HCT116 (cell line): ENCODE measurements at regions of chr11 and their contacts with region 1.

Region 1: DNA sequence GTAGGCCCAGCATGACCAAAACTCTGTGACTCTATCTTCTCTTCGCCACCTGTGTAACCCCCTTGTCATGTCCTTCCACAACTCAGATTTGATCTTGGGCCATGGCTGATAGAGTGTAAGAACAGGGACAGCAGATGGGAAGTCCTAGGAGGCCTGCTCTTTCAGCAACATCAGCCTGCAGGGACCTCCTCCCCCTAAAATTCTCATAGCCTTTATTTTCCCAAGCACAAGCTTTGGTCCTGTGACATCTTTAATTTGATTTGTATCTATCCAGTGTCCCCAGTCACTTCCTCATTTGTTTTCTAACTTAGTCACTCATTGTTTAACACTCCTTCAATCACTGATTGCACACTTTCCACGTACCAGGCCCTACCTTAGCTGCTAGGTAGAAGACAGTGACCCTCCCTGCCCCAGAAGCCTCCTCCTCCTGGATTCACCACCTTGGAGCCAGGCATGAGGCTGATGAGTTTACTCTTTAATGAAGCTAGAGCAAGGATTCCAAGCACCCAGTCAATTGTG is 5.3 kb downstream of the UBQLN3 start:
- DNase-seq: no peak
- ATAC-seq: no peak
- H3K4me3 ChIP-seq: peak overlapping the region; percentile 61 to 93
- H3K27ac ChIP-seq: peak overlapping the region; percentile 65
- H3K4me1 ChIP-seq: peaks cover 10 to 60% of the 10 kb centered on the region in 2 experiments
- H3K27me3 ChIP-seq: no peaks in the 10 kb centered on the region
- CTCF ChIP-seq: no peak
- POLR2A ChIP-seq: no peak
- RAD21 ChIP-seq: no peak

Region 2: GRCh38 chr11:5280582-5281102 is 223.8 kb before region 1 on chr11:
- CTCF ChIA-PET with region 1: no interaction called
- POLR2A ChIA-PET with region 1: no interaction called
- RAD21 ChIA-PET with region 1: no interaction called
- intact Hi-C with region 1: no loop called
- DNase-seq: peak; percentile 97
- ATAC-seq: peak; percentile 97
- H3K4me3 ChIP-seq: no peak overlapping the region
- H3K27ac ChIP-seq: peak overlapping the region; percentile 26; the same call in 1 of the 2 replicates
- H3K4me1 ChIP-seq: peaks cover 18 to 39% of the 10 kb centered on the region in 2 experiments
- H3K27me3 ChIP-seq: no peaks in the 10 kb centered on the region
- CTCF ChIP-seq: no peak
- POLR2A ChIP-seq: no peak
- RAD21 ChIP-seq: no peak

Region 3: DNA sequence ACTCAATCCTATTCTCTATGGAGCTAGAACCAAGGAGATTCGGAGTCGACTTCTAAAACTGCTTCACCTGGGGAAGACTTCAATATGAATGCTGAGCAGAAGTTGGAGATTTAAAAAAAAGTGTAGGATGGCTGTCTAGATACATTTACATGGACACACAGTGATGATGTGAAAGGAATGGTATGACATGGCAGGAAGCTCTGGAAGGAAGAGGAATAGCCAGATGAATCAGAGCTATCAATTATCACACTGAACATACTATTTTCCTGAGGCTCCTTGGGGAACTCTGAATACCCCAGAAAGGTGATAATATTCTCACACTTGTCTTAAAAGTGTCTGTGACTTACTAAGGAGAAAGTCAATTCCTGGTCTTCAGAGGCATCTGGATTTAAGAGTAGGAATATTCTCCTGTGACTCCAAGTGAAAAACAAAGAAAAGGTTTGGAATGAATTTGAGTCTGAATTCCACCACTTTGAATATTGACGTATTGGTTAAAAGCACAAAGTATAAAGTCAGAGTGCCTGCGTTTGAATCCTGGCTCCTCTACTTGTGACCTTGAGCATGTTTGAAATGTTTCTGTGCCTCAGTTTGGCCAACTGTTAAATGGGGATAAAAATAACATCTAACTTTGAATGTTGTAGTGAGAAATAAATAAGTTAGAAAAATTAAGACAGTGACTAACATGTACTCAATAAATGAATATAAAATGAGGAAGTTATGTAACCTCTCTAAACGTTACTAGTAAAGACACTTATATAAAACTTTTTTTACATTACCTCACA is 14.7 kb before region 1 on chr11:
- CTCF ChIA-PET with region 1: no interaction called
- POLR2A ChIA-PET with region 1: interaction called, 56 read pairs
- RAD21 ChIA-PET with region 1: no interaction called
- intact Hi-C with region 1: no loop called
- DNase-seq: no peak
- ATAC-seq: no peak
- H3K4me3 ChIP-seq: no peak overlapping the region
- H3K27ac ChIP-seq: no peak overlapping the region; the same call in 1 of the 2 replicates
- H3K4me1 ChIP-seq: peaks cover 0 to 73% of the 10 kb centered on the region in 2 experiments; a peak in 3 of 4 replicates
- H3K27me3 ChIP-seq: no peaks in the 10 kb centered on the region
- CTCF ChIP-seq: no peak
- POLR2A ChIP-seq: no peak
- RAD21 ChIP-seq: no peak

Region 4: GRCh38 chr11:5514841-5515240 is 10.4 kb after region 1 on chr11:
- CTCF ChIA-PET with region 1: no interaction called
- POLR2A ChIA-PET with region 1: interaction called, 22 read pairs
- RAD21 ChIA-PET with region 1: no interaction called
- intact Hi-C with region 1: no loop called
- DNase-seq: no peak
- ATAC-seq: no peak
- H3K4me3 ChIP-seq: no peak overlapping the region
- H3K27ac ChIP-seq: no peak overlapping the region
- H3K4me1 ChIP-seq: no peaks in the 10 kb centered on the region
- H3K27me3 ChIP-seq: peaks cover 6% of the 10 kb centered on the region; the same call in 1 of the 2 replicates
- CTCF ChIP-seq: no peak
- POLR2A ChIP-seq: no peak
- RAD21 ChIP-seq: no peak

Region 5: DNA sequence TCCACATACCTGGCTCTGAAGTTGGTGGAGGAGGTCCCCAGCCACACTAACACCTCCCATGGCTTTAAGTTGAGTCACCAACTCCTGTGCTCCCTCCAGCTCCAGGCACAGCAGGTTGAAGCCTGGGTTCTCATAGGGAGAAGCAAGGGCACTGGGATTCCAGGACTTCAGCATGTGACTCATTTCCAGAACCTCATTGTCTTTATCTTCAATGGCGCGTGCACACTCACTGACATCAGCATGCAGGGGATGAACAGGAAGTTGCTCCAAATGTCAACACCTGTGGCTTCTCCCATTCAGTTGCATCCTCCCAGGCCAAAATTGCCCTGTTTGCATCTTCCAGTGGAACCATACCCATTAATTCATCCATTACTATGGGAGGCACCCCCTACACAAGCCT is 17.8 kb after region 1 on chr11:
- CTCF ChIA-PET with region 1: no interaction called
- POLR2A ChIA-PET with region 1: interaction called, 22 read pairs
- RAD21 ChIA-PET with region 1: no interaction called
- intact Hi-C with region 1: no loop called
- DNase-seq: no peak
- ATAC-seq: peak; percentile 14; the same call in 1 of the 2 replicates
- H3K4me3 ChIP-seq: no peak overlapping the region
- H3K27ac ChIP-seq: no peak overlapping the region
- H3K4me1 ChIP-seq: no peaks in the 10 kb centered on the region
- H3K27me3 ChIP-seq: peaks cover 24% of the 10 kb centered on the region; the same call in 1 of the 2 replicates
- CTCF ChIP-seq: no peak
- POLR2A ChIP-seq: no peak
- RAD21 ChIP-seq: no peak

Region 6: DNA sequence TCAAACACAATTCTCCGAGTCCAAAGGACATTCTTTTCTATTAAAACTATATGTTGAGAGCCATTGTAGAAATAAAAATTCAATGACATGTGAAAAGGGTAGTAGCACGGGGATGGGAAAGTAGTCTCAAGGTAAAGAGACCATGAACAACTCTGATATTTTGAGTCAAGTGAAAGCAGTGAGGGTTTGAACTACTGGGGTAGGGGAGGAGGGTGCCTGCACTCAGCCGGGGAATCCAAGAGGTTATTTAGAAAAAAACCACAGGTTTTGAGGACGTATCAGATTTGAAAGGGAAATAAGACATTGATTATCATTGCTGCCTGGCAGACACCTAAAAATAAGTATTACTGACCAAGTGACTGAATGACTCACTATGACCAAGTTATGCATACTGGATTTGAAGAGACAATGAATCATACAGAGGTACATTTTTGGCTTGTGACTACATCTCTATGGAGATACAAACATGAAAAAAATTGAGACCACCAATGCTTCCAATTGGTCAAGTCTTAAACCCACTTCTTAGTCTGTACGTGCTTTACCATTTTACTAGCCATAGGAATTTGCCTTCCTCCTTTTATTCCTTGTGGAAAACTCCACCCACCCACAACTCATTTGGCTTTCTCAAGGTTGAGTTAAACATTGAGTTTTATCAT is 46.1 kb after region 1 on chr11:
- CTCF ChIA-PET with region 1: no interaction called
- POLR2A ChIA-PET with region 1: interaction called, 10 read pairs
- RAD21 ChIA-PET with region 1: no interaction called
- intact Hi-C with region 1: no loop called
- DNase-seq: peak; percentile 54
- ATAC-seq: peak; percentile 82
- H3K4me3 ChIP-seq: peak overlapping the region in 1 of 2 experiments; percentile 8; a peak in 1 of 4 replicates
- H3K27ac ChIP-seq: no peak overlapping the region
- H3K4me1 ChIP-seq: peaks cover 3 to 13% of the 10 kb centered on the region in 2 experiments
- H3K27me3 ChIP-seq: peaks cover 16% of the 10 kb centered on the region
- CTCF ChIP-seq: no peak
- POLR2A ChIP-seq: no peak
- RAD21 ChIP-seq: no peak

Region 7: DNA sequence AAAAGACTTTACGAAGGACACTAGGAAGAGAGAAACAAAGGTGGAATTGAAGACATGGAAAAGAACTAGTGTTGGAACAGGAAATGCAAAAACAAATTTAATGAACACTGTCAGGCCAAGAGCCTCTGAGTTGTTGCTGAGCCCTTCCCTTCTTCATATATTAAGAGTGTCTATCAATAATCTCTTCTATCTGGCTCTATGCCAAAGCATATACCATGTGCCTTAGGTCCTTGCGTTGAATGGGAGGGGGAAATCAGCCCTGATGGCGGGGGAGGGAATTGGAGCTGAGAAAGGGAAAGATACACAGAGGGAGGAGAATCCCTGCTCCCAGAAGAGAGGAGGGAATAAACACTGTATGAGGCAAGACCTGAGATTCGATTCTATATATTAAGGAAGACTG is 70.7 kb after region 1 on chr11:
- CTCF ChIA-PET with region 1: no interaction called
- POLR2A ChIA-PET with region 1: no interaction called
- RAD21 ChIA-PET with region 1: no interaction called
- intact Hi-C with region 1: no loop called
- DNase-seq: no peak
- ATAC-seq: no peak
- H3K4me3 ChIP-seq: no peak overlapping the region
- H3K27ac ChIP-seq: no peak overlapping the region
- H3K4me1 ChIP-seq: no peaks in the 10 kb centered on the region
- H3K27me3 ChIP-seq: peaks cover 36% of the 10 kb centered on the region; the same call in 1 of the 2 replicates
- CTCF ChIP-seq: no peak
- POLR2A ChIP-seq: no peak
- RAD21 ChIP-seq: no peak

Region 8: DNA sequence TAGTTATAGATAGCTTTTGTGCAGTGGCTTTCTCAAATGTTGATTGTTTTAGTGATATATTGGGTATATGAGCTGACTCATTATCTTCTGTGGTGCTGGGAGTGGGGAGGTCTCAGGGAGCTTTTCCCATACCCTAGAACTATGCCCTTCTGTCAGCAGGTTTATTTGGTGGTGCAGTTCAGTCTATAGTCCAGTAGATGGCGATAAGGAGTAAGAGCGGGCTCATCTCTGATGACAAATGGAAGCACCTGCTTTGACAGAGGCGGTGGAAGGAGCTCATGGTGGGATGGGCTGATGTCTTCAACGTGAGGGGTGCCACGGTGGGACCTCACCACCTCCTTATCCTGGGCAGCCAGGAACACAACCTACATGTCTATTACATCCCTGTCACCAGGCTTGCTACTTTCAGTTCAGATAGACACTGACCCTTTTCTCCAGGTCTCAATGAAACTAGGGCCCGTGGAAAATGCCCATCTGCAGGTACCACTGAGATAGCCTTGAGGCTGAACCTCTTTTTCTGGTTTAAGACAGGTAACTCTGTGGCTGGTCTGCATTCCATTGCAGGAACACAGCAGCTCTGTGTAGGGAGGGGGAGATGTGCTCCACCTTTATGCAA is 1308.0 kb after region 1 on chr11:
- CTCF ChIA-PET with region 1: no interaction called
- POLR2A ChIA-PET with region 1: no interaction called
- RAD21 ChIA-PET with region 1: no interaction called
- intact Hi-C with region 1: no loop called
- DNase-seq: peak; percentile 15
- ATAC-seq: peak; percentile 94
- H3K4me3 ChIP-seq: no peak overlapping the region
- H3K27ac ChIP-seq: no peak overlapping the region
- H3K4me1 ChIP-seq: no peaks in the 10 kb centered on the region
- H3K27me3 ChIP-seq: peaks cover 10% of the 10 kb centered on the region
- CTCF ChIP-seq: peak; percentile 28 to 94 (median 91); a peak in 5 of 6 replicates
- POLR2A ChIP-seq: no peak
- RAD21 ChIP-seq: peak; percentile 54